Right cardiac atrium (tissue), 5 donors: ENCODE measurements at regions of chr15 and their contacts with region 1.

Region 1: GRCh38 chr15:100338971-100339444 is 2.8 kb downstream of the ADAMTS17 start:
- DNase-seq: peak; percentile 65 to 81 (median 65)
- ATAC-seq: peak; percentile 48 to 53
- H3K4me3 ChIP-seq: no peak overlapping the region
- H3K27ac ChIP-seq: no peak overlapping the region
- H3K4me1 ChIP-seq: no peaks in the 10 kb centered on the region
- H3K27me3 ChIP-seq: no peaks in the 10 kb centered on the region

Region 2: GRCh38 chr15:99424978-99425656 is 913.9 kb before region 1 on chr15:
- intact Hi-C with region 1: no loop called
- DNase-seq: peak; percentile 53 to 82 (median 69)
- ATAC-seq: peak; percentile 88 to 96
- H3K4me3 ChIP-seq: no peak overlapping the region
- H3K27ac ChIP-seq: peak overlapping the region; percentile 97
- H3K4me1 ChIP-seq: peaks cover 10% of the 10 kb centered on the region
- H3K27me3 ChIP-seq: no peaks in the 10 kb centered on the region

Region 3: GRCh38 chr15:99954361-99955180 is 384.4 kb before region 1 on chr15:
- intact Hi-C with region 1: loop called in 1 of 4 experiments (anchors 10 kb)
- DNase-seq: no peak
- ATAC-seq: no peak
- H3K4me3 ChIP-seq: no peak overlapping the region
- H3K27ac ChIP-seq: no peak overlapping the region
- H3K4me1 ChIP-seq: no peaks in the 10 kb centered on the region
- H3K27me3 ChIP-seq: no peaks in the 10 kb centered on the region

Region 4: DNA sequence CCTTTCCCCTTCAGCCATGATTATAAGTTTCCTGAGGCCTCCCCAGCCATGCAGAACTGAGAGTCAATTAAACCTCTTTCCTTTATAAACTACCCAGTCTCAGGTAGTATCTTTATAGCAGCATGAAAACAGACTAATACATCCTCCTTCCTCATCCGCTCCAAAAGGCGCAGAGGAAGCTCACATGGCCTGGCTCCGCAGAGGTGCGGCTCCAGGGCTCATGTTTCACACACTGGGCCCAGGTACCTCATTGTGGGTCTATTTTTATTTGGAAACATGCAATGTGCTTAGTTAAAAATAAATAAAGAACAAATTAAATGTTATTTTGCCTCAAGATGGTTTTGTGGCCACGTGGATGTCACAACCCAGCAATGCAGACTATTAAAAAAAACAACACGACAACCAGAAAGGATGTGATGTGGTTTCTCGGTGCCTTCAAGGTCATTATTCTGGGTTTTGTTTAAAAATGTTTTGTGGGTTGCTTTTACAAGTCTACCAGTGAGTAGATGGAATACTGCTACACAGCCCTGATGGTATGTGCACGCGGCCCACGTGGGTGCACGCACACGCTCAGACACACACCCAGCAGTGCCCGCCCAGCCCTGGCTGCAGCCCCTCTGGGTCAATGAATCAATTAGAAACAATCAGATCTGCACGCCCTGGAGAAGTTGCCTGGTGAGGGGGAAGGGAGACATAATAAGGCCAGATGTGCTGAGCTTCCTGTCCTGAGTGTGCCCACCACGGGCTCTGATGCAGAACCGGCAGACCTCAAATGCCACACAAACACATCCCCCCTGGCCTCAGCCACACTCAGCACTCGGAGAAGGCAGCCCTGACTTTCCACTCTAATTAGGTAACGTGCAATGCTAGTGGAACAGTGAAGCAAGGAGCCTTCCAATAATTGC is 137.4 kb before region 1 on chr15:
- intact Hi-C with region 1: loop called in 1 of 4 experiments (anchors 10 kb)
- DNase-seq: no peak
- ATAC-seq: no peak
- H3K4me3 ChIP-seq: no peak overlapping the region
- H3K27ac ChIP-seq: no peak overlapping the region
- H3K4me1 ChIP-seq: no peaks in the 10 kb centered on the region
- H3K27me3 ChIP-seq: no peaks in the 10 kb centered on the region